MCF 10A (cell line): ENCODE measurements at regions of chr16 and their contacts with region 1.

Region 1: DNA sequence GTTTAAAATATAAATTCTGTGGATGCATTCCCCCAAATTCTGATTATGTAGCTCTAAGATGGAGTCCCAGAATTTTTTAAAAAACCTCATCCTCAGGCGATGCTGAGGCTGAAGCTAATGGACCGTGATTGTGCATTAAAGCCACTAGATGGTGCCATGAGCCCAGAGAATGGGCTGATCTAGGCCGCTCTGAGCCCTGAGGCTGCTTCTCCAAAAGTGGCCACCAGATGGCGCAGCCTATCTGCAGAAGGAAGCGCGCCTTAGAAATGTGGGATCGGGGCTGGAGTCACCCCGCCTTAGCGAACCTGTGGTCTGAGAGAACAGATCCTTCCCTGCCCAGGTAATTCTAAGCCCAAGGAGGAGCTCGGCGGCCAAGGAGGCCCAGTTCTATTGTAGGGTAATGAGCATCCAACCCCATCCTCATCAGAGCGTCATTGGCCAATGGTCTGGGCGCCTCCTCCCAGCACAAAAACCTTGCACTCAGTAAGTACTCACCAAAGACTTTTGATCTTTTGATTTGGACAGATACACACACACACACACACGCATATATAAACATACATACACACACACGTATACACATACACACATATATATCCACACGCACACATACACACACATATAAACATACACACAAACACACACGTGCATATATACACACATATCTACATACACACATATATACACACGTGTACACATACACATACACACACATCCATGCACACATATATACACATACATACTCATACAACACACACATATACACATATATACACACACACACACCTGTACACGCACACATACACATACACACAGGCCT is 13.7 kb upstream of the MMP2 start:
- DNase-seq: peak; percentile 80
- H3K4me3 Mint-ChIP-seq: no peak overlapping the region
- H3K27ac Mint-ChIP-seq: no peak overlapping the region
- H3K4me1 Mint-ChIP-seq: peaks cover 3% of the 10 kb centered on the region
- H3K27me3 Mint-ChIP-seq: no peaks in the 10 kb centered on the region
- CTCF ChIP-seq: peak; percentile 100

Region 2: DNA sequence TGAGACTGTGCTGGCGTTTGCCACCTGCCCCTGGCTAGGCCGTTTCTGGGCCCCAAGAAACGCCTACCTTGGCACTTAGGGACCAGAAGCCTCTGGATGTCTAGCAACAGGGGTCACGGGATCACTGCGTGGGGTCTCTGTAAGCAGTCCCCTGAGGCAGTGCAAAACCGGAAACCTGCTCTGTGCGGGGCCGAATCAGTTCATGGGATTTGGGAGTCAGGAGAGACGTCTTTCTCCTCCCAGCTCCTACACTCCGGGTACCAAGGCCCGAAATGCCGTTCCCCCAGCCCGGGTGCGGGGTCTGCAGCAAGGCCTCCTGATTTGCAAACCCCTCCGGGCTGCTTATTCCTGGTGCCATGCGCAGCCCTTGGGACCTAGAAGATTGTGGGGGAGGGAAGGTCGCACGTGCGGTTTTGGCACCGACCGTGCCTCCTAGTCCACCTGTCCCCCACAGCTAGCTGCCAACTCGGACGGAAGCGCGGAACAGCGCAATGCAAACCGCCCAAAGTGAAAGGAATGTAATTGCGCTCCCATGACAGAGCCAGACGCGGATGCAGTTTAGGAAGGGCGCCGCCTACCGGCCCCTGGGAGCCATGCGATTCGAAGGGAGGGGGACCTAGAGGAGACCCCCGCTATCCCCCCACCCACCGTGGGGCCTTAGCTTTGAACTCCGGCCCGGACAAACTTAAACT is 528.2 kb before region 1 on chr16:
- CTCF ChIA-PET with region 1: interaction called, 12 read pairs
- POLR2A ChIA-PET with region 1: no interaction called
- intact Hi-C with region 1: loop called (anchors 2 kb)
- DNase-seq: peak; percentile 77
- H3K4me3 Mint-ChIP-seq: peak overlapping the region; percentile 88
- H3K27ac Mint-ChIP-seq: peak overlapping the region; percentile 97
- H3K4me1 Mint-ChIP-seq: peaks cover 10% of the 10 kb centered on the region
- H3K27me3 Mint-ChIP-seq: no peaks in the 10 kb centered on the region
- CTCF ChIP-seq: peak; percentile 80

Region 3: GRCh38 chr16:55494994-55495421 is 29.7 kb after region 1 on chr16:
- CTCF ChIA-PET with region 1: interaction called, 35 read pairs
- POLR2A ChIA-PET with region 1: interaction called, 3 read pairs
- intact Hi-C with region 1: loop called (anchors 2 kb)
- DNase-seq: peak; percentile 71
- H3K4me3 Mint-ChIP-seq: no peak overlapping the region
- H3K27ac Mint-ChIP-seq: no peak overlapping the region
- H3K4me1 Mint-ChIP-seq: peaks cover 27% of the 10 kb centered on the region
- H3K27me3 Mint-ChIP-seq: no peaks in the 10 kb centered on the region
- CTCF ChIP-seq: peak; percentile 40

Region 4: DNA sequence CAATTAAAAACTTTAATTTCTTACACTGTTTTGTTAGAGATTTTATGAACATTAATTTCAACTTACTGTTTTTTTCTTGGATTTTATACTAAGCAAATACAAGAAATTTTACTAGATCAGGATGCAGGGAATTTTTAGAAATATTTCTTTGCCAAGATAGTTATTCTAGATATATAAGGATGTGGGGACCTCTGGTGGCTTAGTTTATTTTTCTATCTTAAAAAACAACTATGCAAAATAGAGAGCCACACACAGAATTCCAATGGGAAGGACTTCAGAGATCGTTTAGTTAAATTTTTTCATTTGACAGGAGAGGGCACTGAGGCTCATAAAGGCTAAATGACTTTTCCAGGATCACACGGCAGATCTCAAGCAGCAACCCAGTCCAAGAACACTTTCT is 78.2 kb after region 1 on chr16:
- CTCF ChIA-PET with region 1: interaction called, 122 read pairs
- POLR2A ChIA-PET with region 1: interaction called, 6 read pairs
- intact Hi-C with region 1: loop called (anchors 1 kb)
- DNase-seq: peak; percentile 49
- H3K4me3 Mint-ChIP-seq: no peak overlapping the region
- H3K27ac Mint-ChIP-seq: no peak overlapping the region
- H3K4me1 Mint-ChIP-seq: no peaks in the 10 kb centered on the region
- H3K27me3 Mint-ChIP-seq: no peaks in the 10 kb centered on the region
- CTCF ChIP-seq: peak; percentile 23

Region 5: DNA sequence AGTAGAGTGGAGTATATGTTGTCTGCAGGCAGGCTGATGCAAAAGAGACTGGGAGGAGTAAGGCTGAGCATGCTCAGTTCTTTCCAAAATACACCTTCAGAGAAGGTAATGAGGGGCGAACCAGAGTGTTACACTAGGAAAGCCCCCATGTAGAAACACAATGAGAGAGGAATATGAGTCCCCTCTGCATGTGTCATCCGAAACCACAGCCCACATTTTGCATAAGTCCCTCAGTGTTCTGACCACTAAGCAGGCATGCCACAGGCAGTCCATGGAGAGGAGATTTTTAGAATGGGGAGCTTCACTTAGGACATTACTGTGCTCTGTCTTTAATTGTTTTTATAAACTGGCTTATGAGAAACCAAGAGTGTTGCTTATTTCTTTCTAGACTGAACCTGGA is 222.5 kb after region 1 on chr16:
- CTCF ChIA-PET with region 1: interaction called, 29 read pairs
- POLR2A ChIA-PET with region 1: interaction called, 3 read pairs
- intact Hi-C with region 1: no loop called
- DNase-seq: no peak
- H3K4me3 Mint-ChIP-seq: no peak overlapping the region
- H3K27ac Mint-ChIP-seq: no peak overlapping the region
- H3K4me1 Mint-ChIP-seq: no peaks in the 10 kb centered on the region
- H3K27me3 Mint-ChIP-seq: peaks cover 38% of the 10 kb centered on the region
- CTCF ChIP-seq: no peak

Region 6: GRCh38 chr16:55760310-55761001 is 295.2 kb after region 1 on chr16:
- CTCF ChIA-PET with region 1: no interaction called
- POLR2A ChIA-PET with region 1: no interaction called
- intact Hi-C with region 1: no loop called
- DNase-seq: no peak
- H3K4me3 Mint-ChIP-seq: no peak overlapping the region
- H3K27ac Mint-ChIP-seq: no peak overlapping the region
- H3K4me1 Mint-ChIP-seq: peaks cover 7% of the 10 kb centered on the region
- H3K27me3 Mint-ChIP-seq: no peaks in the 10 kb centered on the region
- CTCF ChIP-seq: no peak

Region 7: GRCh38 chr16:56317998-56318826 is 852.9 kb after region 1 on chr16:
- CTCF ChIA-PET with region 1: interaction called, 3 read pairs
- POLR2A ChIA-PET with region 1: no interaction called
- intact Hi-C with region 1: loop called (anchors 10 kb)
- DNase-seq: peak; percentile 79
- H3K4me3 Mint-ChIP-seq: no peak overlapping the region
- H3K27ac Mint-ChIP-seq: no peak overlapping the region
- H3K4me1 Mint-ChIP-seq: no peaks in the 10 kb centered on the region
- H3K27me3 Mint-ChIP-seq: peaks cover 30% of the 10 kb centered on the region
- CTCF ChIP-seq: peak; percentile 96